Activated T-helper 1 cell treated with anti-CD3 and anti-CD28 coated beads, Interleukin-12 subunit alpha, Interleukin-12 subunit beta, Interleukin-2, Interleukin-4 antibody, amounts not matched to agents 30 ng/mL and 10 ng/mL and 1 ng/mL, durations not matched to agents 14 hours and 24 hours and 36 hours (primary cell): ENCODE measurements at regions of chr15 and their contacts with region 1.

Region 1: DNA sequence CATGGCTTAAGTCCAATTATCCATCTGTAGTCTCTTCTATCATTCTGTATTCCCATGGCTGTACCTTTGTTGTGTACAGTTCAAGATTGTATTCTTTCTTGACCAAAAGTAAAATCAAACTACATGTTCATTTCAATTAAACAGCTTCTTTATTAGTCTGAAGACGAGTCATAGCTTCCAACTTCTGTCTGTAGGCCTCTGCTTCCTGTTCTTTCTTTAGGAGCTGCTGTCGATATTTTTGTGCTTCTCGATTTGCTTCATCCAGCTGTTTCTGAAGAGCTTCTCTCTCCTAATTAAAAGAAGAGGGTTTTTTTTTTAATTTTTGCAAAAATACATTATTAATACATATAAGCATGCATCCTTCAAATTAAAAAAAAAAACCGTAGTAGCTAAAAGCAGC is 13.0 kb upstream of the HDC start:
- DNase-seq: no peak
- H3K4me3 Mint-ChIP-seq: no peak overlapping the region
- H3K27ac Mint-ChIP-seq: peak overlapping the region; percentile 34
- H3K4me1 Mint-ChIP-seq: peaks cover 22% of the 10 kb centered on the region
- H3K27me3 Mint-ChIP-seq: no peaks in the 10 kb centered on the region

Region 2: DNA sequence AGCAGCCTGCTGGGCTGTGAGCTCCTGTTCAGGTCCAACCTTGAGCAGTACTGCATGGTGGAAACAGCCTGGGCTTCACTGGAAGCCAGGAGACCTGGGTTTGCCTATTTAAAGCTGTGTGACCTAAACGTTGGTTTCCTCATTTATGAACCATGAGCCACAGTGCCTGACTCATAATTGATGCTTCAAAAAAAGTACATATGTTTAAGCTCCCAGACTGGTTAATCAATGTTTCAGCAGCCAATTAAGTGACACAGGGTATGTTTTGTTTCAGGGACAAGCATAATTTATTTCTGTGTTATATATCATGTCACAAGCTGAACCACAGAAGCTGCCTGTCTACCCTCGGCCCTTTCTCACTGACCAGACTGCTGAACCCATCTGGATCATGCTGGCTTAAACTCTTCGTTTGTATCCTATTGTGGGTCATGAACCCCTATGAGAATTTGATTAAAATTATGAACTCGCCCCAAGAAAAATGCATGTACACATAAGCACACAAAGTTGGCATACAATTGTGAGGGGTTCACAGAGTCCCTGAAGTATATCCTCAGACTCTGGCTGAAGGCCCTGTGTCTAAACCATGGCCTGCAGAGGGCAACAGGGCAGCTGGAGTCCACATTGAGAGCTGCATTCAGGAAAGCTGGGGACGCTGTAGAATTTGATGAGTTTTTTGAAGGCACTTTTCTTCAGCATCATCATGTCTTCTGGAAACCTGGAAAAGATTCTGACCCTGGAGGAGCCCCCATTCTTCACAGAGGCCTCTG is 36.6 kb before region 1 on chr15:
- intact Hi-C with region 1: loop called (anchors 5 kb)
- DNase-seq: no peak
- H3K4me3 Mint-ChIP-seq: no peak overlapping the region
- H3K27ac Mint-ChIP-seq: peak overlapping the region; percentile 78
- H3K4me1 Mint-ChIP-seq: peaks cover 43% of the 10 kb centered on the region
- H3K27me3 Mint-ChIP-seq: no peaks in the 10 kb centered on the region

Region 3: DNA sequence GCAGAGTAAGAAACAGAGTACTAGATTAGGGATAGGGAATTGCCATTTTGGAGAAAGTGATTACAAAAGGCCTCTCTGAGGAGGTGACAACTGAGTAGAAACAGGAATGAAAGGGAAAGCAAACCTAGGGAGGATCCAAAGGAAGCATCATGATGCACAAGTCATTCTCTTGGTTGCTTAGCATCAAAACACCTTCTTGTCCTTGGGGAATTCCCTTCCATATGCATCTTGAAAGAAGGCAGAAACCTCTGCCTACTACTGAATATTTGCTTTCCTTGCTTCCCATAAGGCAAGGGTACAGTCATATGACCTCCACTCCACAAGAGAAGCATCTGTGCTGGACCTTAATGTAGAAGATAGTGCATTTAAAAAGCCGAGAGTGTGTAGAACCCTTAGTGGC is 52.4 kb after region 1 on chr15:
- intact Hi-C with region 1: no loop called
- DNase-seq: no peak
- H3K4me3 Mint-ChIP-seq: no peak overlapping the region
- H3K27ac Mint-ChIP-seq: peak overlapping the region; percentile 69
- H3K4me1 Mint-ChIP-seq: peaks cover 34% of the 10 kb centered on the region
- H3K27me3 Mint-ChIP-seq: no peaks in the 10 kb centered on the region

Region 4: DNA sequence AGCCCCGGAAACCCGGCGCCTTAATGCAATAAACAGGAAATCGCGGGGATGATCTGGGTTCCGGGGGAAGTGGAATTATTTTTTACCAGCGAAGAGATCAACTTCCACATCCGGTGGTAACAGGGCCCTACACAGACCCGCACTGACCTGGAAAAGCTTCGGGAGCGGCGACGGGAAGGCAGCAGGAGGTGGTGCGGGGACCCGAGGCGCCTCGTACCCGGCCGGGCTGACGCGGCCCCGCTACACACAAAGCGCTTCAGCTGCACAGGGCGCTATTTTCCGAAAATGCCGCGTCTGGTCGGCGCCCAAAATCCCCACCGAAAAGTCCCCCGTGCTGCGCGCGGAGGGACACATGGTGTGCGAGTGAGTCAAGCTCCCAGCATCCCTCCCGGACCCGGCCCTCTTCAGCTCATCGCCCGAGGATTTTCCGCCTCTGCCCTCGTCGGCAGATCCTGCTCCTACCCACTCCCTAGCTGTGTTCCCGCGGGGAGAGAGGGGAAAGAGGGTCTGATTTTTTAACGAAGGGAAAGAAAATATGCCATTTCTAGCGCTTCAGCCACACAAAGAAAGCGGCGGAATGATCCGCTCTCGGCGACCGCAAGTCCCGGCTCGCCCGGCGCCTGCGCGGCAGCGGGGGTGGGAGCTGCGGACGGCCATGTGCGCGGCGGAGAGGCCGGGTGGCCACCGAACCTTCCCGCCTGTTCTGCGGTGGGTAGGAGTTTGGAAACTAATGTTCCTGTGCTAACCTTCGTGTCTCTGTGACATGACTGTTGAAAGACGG is 76.5 kb after region 1 on chr15 and contains the start of gene GABPB1:
- intact Hi-C with region 1: no loop called
- DNase-seq: peak; percentile 87
- H3K4me3 Mint-ChIP-seq: peak within 1 kb of the TSS; percentile 100
- H3K27ac Mint-ChIP-seq: peak within 1 kb of the TSS; percentile 100
- H3K4me1 Mint-ChIP-seq: peaks cover 48% of the 10 kb centered on the region
- H3K27me3 Mint-ChIP-seq: no peaks in the 10 kb centered on the region
- total RNA-seq, gene GABPB1: 80.7 and 81.0 TPM in 2 replicates